ENCODE measurements at regions of chr16 and their contacts with region 1.

Region 1: DNA sequence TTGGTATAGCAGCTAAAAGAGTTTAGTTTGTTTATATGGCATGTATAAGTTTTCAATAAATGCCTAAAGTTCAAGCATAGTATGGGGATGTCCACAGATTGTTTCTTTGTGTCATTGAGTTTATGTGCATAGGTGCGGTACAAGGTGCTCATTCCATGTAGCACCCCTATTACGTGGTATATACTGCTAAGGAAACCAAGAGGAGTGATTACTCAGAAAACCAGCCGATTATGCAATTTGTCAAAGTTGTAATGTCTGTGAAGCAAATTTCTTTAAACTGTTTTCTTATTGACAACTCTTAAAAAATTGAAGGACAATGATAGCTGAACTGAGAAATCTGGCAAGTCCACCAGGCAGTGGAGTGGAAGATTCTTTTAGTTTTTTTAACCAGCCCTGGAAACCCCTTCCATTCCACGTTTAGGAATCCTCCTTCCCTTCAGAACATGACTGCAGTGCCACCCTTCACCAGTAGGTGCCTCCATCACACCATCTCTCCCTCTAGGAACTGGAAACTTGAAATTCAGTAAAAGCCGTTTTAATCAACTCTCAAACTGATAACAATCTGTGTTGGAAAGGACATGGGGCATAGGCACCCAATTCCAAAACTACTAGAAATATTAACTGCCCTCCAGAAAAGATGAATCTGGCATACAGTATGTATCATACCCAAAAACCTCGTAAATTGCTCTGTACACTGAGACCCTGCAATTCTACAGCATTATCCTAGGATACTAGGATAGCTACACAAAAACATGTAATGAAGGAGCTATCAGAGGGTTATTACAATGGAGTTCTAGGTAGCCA is 43.5 kb downstream of the REXO5 start:
- DNase-seq: peak; percentile 73
- ATAC-seq: peak; percentile 69
- H3K4me3 ChIP-seq: no peak overlapping the region
- H3K4me3 Mint-ChIP-seq: no peak overlapping the region
- H3K27ac ChIP-seq: no peak overlapping the region
- H3K27ac Mint-ChIP-seq: no peak overlapping the region
- H3K4me1 ChIP-seq: peaks cover 0 to 3% of the 10 kb centered on the region in 2 donors
- H3K4me1 Mint-ChIP-seq: peaks cover 4% of the 10 kb centered on the region
- H3K27me3 ChIP-seq: no peaks in the 10 kb centered on the region
- H3K27me3 Mint-ChIP-seq: no peaks in the 10 kb centered on the region
- CTCF ChIP-seq: peak; percentile 100

Region 2: DNA sequence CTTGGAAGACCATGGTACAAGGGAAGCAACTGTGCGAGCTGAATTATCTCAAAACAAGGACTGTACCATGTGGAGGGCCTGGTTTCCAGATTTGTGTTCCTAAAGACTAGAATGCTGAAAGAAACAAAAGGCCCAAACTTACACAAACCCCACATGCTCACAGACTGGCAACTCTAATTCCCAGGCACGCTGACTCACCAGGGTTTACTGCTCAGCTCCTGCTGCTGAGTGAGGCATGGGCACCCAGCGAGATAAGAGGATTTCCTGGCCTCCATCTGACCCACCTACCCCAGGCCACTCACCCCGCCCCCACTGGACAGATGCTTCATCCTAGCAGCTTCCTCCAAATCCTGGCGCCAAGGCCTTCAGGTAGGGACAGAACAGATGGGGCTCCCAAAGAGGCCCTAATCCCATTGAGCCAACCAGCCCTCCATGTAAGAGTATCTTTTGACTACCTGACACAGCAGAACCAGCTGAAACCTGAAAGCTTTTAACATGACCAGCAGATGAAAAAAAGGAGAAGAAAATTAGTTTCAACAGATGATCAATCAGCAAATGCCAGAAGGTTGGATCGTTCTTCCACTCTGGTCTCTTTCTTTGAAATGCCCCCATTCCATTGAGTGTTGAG is 16.5 kb after region 1 on chr16:
- CTCF ChIA-PET with region 1: interaction called, 21 read pairs
- POLR2A ChIA-PET with region 1: no interaction called
- intact Hi-C with region 1: no loop called
- DNase-seq: no peak
- ATAC-seq: no peak
- H3K4me3 ChIP-seq: no peak overlapping the region
- H3K4me3 Mint-ChIP-seq: no peak overlapping the region
- H3K27ac ChIP-seq: no peak overlapping the region
- H3K27ac Mint-ChIP-seq: no peak overlapping the region
- H3K4me1 ChIP-seq: no peaks in the 10 kb centered on the region
- H3K4me1 Mint-ChIP-seq: peaks cover 10% of the 10 kb centered on the region
- H3K27me3 ChIP-seq: no peaks in the 10 kb centered on the region
- H3K27me3 Mint-ChIP-seq: no peaks in the 10 kb centered on the region
- CTCF ChIP-seq: no peak

Region 3: DNA sequence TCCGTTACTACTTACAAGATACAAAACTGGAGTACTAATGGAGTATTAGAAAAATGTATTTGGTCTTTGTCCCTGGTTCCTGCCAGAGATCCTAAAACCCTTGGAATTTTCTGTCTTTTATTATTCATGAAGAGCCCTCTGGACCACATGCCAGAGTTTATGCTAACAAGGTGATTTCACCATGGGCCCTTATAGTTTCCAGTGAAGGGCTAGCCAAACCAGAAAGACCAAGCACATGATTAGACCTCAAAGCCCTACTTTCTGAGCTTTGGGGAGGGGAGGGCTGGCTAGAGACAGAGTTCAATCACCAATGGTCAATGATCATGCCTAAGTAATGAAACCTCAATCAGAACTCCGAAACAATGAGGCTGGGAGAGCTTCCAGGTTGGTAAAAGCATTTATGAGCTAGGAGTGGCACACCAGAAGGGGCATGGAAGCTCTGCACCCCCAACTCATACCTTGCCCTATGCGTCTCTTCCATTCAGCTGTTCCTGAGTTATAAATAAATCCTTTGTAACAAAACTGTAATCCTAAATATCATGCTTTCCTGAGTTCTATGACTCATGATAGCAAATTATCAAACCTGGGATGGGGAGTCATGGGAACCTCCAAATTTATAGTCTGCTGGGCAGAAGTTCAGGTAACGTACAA is 40.0 kb after region 1 on chr16:
- CTCF ChIA-PET with region 1: no interaction called
- POLR2A ChIA-PET with region 1: no interaction called
- intact Hi-C with region 1: no loop called
- DNase-seq: no peak
- ATAC-seq: no peak
- H3K4me3 ChIP-seq: no peak overlapping the region
- H3K4me3 Mint-ChIP-seq: no peak overlapping the region
- H3K27ac ChIP-seq: no peak overlapping the region
- H3K27ac Mint-ChIP-seq: no peak overlapping the region
- H3K4me1 ChIP-seq: no peaks in the 10 kb centered on the region
- H3K4me1 Mint-ChIP-seq: no peaks in the 10 kb centered on the region
- H3K27me3 ChIP-seq: no peaks in the 10 kb centered on the region
- H3K27me3 Mint-ChIP-seq: no peaks in the 10 kb centered on the region
- CTCF ChIP-seq: no peak

Region 4: DNA sequence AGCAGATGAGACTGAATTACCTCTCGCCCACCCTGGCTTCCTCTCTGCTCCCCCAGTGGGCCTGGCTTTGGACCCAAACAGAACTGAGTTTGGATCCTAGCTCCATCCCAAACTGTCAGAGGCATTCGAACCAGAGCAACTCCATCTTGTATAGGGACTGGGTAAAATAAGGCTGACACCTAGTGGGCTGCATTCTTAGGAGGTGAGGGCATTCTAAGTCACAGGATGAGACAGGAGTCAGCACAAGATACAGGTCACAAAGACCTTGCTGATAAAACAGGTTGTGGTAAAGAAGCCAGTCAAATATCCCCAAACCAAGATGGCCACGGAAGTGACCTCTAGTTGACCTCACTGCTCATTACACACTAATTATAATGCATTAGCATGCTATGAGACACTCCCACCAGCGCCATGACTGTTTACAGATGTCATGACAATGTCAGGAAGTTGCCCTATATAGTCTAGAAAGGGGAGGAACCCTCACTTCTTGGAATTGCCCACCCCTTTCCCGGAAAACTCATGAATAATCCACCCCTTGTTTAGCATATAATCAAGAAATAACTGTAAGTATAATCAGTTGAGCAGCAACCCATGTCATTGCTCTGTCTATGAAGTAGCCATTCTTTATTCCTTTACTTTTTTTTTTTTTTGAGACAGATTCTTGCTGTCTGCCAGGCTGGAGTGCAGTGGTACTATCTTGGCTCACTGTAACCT is 95.2 kb after region 1 on chr16:
- CTCF ChIA-PET with region 1: interaction called, 17 read pairs
- POLR2A ChIA-PET with region 1: no interaction called
- intact Hi-C with region 1: loop called (anchors 1 kb)
- DNase-seq: peak; percentile 13
- ATAC-seq: no peak
- H3K4me3 ChIP-seq: no peak overlapping the region
- H3K4me3 Mint-ChIP-seq: no peak overlapping the region
- H3K27ac ChIP-seq: no peak overlapping the region
- H3K27ac Mint-ChIP-seq: no peak overlapping the region
- H3K4me1 ChIP-seq: no peaks in the 10 kb centered on the region
- H3K4me1 Mint-ChIP-seq: peaks cover 4% of the 10 kb centered on the region
- H3K27me3 ChIP-seq: no peaks in the 10 kb centered on the region
- H3K27me3 Mint-ChIP-seq: no peaks in the 10 kb centered on the region
- CTCF ChIP-seq: no peak

Region 5: GRCh38 chr16:21078563-21078962 is 228.8 kb after region 1 on chr16:
- CTCF ChIA-PET with region 1: interaction called, 51 read pairs
- POLR2A ChIA-PET with region 1: no interaction called
- intact Hi-C with region 1: loop called (anchors 1 kb)
- DNase-seq: no peak
- ATAC-seq: no peak
- H3K4me3 ChIP-seq: no peak overlapping the region
- H3K4me3 Mint-ChIP-seq: no peak overlapping the region
- H3K27ac ChIP-seq: no peak overlapping the region
- H3K27ac Mint-ChIP-seq: no peak overlapping the region
- H3K4me1 ChIP-seq: no peaks in the 10 kb centered on the region
- H3K4me1 Mint-ChIP-seq: no peaks in the 10 kb centered on the region
- H3K27me3 ChIP-seq: no peaks in the 10 kb centered on the region
- H3K27me3 Mint-ChIP-seq: peaks cover 3% of the 10 kb centered on the region
- CTCF ChIP-seq: no peak

Region 6: DNA sequence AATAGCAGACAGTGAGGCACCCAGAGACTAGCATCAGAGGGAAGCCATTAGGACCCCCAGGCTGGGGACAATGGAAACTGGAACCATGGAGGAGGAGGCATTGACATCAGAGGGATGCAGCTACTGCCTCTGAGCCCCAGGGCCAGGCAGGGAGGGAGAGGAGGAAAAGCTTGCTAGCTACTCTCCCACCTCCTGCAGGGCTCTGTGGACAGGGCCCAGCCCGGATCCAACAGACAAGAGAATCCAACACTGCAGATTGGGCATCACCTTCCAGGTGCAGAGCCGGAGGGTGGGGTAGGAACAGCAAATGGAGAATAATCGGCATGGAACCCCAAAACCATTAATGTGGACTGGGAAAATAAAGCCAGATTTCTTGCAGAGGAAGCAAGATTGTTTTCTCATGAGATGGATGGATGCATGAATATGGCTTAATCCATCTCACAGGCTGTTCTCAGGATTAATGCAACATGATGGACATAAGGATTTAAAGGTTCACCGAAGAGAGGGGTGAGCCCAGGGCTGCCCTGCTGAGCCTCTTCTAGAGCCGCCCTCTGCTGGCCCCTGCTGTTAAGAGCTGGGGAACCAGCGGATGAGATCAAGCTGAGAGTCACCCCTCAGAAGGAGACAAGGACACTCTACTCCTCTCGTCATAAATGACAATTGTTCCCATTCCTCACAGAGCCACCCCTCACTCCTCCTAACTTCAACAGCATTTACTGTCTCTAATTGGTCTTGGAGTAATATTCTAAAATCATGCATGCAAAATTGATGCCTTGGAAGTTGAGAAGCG is 252.0 kb after region 1 on chr16:
- CTCF ChIA-PET with region 1: interaction called, 33 read pairs
- POLR2A ChIA-PET with region 1: no interaction called
- intact Hi-C with region 1: loop called (anchors 5 kb)
- DNase-seq: peak; percentile 21
- ATAC-seq: no peak
- H3K4me3 ChIP-seq: no peak overlapping the region
- H3K4me3 Mint-ChIP-seq: no peak overlapping the region
- H3K27ac ChIP-seq: no peak overlapping the region
- H3K27ac Mint-ChIP-seq: no peak overlapping the region
- H3K4me1 ChIP-seq: no peaks in the 10 kb centered on the region
- H3K4me1 Mint-ChIP-seq: no peaks in the 10 kb centered on the region
- H3K27me3 ChIP-seq: peaks cover 0 to 11% (median 5%) of the 10 kb centered on the region in 4 experiments
- H3K27me3 Mint-ChIP-seq: peaks cover 41% of the 10 kb centered on the region
- CTCF ChIP-seq: no peak

Region 7: GRCh38 chr16:21554795-21555585 is 705.2 kb after region 1 on chr16:
- CTCF ChIA-PET with region 1: no interaction called
- POLR2A ChIA-PET with region 1: no interaction called
- intact Hi-C with region 1: loop called (anchors 10 kb)
- DNase-seq: peak; percentile 100
- ATAC-seq: peak; percentile 98
- H3K4me3 ChIP-seq: peak overlapping the region in 4 of 5 experiments; percentile 15 to 46 (median 34)
- H3K4me3 Mint-ChIP-seq: peak overlapping the region; percentile 84
- H3K27ac ChIP-seq: peak overlapping the region; percentile 70 to 72
- H3K27ac Mint-ChIP-seq: peak overlapping the region; percentile 94
- H3K4me1 ChIP-seq: peaks cover 27 to 34% of the 10 kb centered on the region in 2 donors
- H3K4me1 Mint-ChIP-seq: peaks cover 27% of the 10 kb centered on the region
- H3K27me3 ChIP-seq: no peaks in the 10 kb centered on the region
- H3K27me3 Mint-ChIP-seq: no peaks in the 10 kb centered on the region
- CTCF ChIP-seq: peak; percentile 100